HepG2 (cell line): ENCODE measurements at regions of chr16 and their contacts with region 1.

Region 1: DNA sequence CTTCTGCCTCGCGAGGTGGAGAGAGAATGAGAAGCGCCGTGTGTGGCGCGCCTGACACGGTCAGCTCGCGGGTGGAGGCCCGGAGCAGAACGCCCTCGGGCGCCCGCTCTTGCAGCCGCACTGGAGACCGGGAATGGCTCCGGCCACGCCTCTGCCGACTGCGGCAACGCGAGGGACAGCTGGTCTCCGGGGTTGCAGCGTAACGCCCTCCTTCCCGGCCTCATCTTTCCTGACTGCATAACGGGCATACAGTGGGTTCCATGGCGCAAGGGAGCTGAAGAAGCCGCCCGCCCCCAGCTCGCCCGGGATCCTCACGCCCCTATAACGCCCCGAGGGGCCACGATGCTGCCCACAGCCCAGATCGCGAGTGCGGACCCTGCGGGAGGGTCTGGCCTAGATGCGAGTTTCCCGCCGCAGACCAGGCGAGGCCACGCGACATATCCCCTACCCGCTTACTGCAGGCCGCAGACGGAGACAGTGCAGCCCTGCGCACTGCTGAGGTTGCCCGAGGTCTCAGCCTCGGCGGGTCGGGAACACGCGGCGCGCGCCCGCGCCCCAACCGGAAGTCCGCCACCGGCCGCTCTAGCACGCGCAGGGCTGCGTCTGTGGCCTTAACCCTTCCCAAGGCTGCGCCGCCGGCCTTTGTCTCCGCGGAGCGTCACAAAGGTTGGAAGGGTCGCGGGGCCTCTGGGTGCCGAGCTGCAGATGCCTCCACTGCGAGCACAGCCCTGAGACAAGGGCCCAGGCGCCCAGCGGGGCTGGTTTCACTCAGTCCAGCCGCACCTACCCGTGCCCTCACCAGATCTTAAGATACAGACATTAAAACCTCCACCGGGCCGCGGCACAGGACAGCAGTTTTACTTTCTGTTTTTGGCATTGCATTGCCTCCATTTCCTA is 18.8 kb downstream of the BCL7C start:
- DNase-seq: peak; percentile 91
- ATAC-seq: peak; percentile 93
- H3K4me3 ChIP-seq: peak overlapping the region; percentile 84 to 97 (median 86)
- H3K27ac ChIP-seq: peak overlapping the region; percentile 86
- H3K4me1 ChIP-seq: peaks cover 35% of the 10 kb centered on the region
- H3K27me3 ChIP-seq: no peaks in the 10 kb centered on the region; a peak in 1 of 5 replicates
- CTCF ChIP-seq: peak; percentile 45
- EP300 ChIP-seq: peak; percentile 50 to 52; a peak in 2 of 4 replicates
- POLR2A ChIP-seq: peak; percentile 96 to 99
- RAD21 ChIP-seq: peak; percentile 80

Region 2: GRCh38 chr16:30786936-30787612 is 88.0 kb before region 1 on chr16 and contains the start of gene ZNF629:
- CTCF ChIA-PET with region 1: no interaction called
- POLR2A ChIA-PET with region 1: interaction called, 27 read pairs
- in situ Hi-C with region 1: no loop called
- intact Hi-C with region 1: loop called (anchors 1 kb)
- DNase-seq: peak; percentile 79
- ATAC-seq: peak; percentile 83
- H3K4me3 ChIP-seq: peak within 1 kb of the TSS; percentile 99 to 100 (median 100)
- H3K27ac ChIP-seq: peak within 1 kb of the TSS; percentile 78
- H3K4me1 ChIP-seq: peaks cover 30% of the 10 kb centered on the region
- H3K27me3 ChIP-seq: peaks cover 3 to 5% of the 10 kb centered on the region in 2 experiments; a peak in 2 of 5 replicates
- CTCF ChIP-seq: peak; percentile 43
- EP300 ChIP-seq: peak in 1 of 2 experiments; percentile 46; a peak in 2 of 4 replicates
- POLR2A ChIP-seq: peak; percentile 47 to 52
- RAD21 ChIP-seq: peak; percentile 62
- total RNA-seq, gene ZNF629: 14.3 and 16.5 TPM in 2 replicates

Region 3: GRCh38 chr16:30813821-30814189 is 61.3 kb before region 1 on chr16:
- CTCF ChIA-PET with region 1: no interaction called
- POLR2A ChIA-PET with region 1: interaction called, 69 read pairs
- in situ Hi-C with region 1: no loop called
- intact Hi-C with region 1: no loop called
- DNase-seq: no peak
- ATAC-seq: no peak
- H3K4me3 ChIP-seq: peak overlapping the region; percentile 38 to 70 (median 59); a peak in 5 of 6 replicates
- H3K27ac ChIP-seq: peak overlapping the region; percentile 91
- H3K4me1 ChIP-seq: peaks cover 47% of the 10 kb centered on the region
- H3K27me3 ChIP-seq: no peaks in the 10 kb centered on the region
- CTCF ChIP-seq: no peak
- EP300 ChIP-seq: no peak
- POLR2A ChIP-seq: no peak
- RAD21 ChIP-seq: no peak

Region 4: GRCh38 chr16:30844671-30845449 is 30.2 kb before region 1 on chr16:
- CTCF ChIA-PET with region 1: interaction called, 3 read pairs
- POLR2A ChIA-PET with region 1: interaction called, 67 read pairs
- in situ Hi-C with region 1: no loop called
- intact Hi-C with region 1: loop called (anchors 2 kb)
- DNase-seq: peak; percentile 97
- ATAC-seq: peak; percentile 86
- H3K4me3 ChIP-seq: peak overlapping the region; percentile 32 to 66 (median 45)
- H3K27ac ChIP-seq: peak overlapping the region; percentile 64
- H3K4me1 ChIP-seq: peaks cover 33% of the 10 kb centered on the region
- H3K27me3 ChIP-seq: no peaks in the 10 kb centered on the region
- CTCF ChIP-seq: peak; percentile 96
- EP300 ChIP-seq: no peak; a peak in 1 of 4 replicates
- POLR2A ChIP-seq: peak; percentile 23 to 44; a peak in 3 of 4 replicates
- RAD21 ChIP-seq: peak; percentile 89

Region 5: DNA sequence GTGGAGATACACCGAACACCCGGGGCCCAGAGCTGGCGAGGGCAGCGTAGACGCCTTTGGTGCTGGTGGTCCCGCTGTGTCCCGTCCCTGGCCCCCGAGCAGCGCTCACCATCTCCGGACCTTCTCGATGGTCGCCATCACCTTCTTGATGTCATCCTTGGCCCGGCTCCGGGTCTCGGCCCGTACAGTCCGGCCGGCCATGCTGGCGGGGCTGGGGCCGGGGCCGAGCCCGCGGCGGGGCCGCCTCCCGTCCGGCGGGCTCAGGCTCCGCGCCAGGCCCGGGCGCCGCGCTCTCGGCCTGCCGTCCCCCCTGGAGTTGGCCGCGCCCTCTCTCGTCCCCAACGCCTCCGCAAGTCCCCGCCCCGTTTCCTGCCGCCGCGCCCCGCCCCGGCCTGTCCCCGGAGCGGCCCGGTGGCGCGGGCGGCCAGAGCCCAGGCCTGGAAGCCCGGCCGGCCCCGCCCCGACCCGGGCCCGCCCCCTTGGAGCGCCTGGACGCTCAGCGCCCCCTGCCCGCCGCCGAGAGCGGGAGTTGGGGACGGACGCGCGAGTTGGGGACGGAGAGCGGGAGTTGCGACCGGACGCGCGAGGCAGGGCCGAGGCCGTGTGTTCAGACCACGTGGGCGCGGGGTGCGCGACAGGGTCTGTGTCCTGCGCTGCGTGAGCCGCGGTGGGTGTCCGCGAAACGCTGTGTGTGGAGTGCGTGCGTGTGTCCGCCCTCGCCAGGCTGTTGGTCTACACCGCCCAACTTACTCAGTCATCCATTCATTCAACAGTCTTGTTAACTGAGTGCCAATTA is 18.9 kb after region 1 on chr16 and contains the start of gene BCL7C:
- CTCF ChIA-PET with region 1: no interaction called
- POLR2A ChIA-PET with region 1: interaction called, 18 read pairs
- in situ Hi-C with region 1: no loop called
- intact Hi-C with region 1: loop called (anchors 2 kb)
- DNase-seq: peak; percentile 90
- ATAC-seq: peak; percentile 82
- H3K4me3 ChIP-seq: peak within 1 kb of the TSS; percentile 72 to 100 (median 84)
- H3K27ac ChIP-seq: peak within 1 kb of the TSS; percentile 65
- H3K4me1 ChIP-seq: peaks cover 56% of the 10 kb centered on the region
- H3K27me3 ChIP-seq: no peaks in the 10 kb centered on the region
- CTCF ChIP-seq: peak; percentile 93
- EP300 ChIP-seq: no peak
- POLR2A ChIP-seq: peak; percentile 52 to 86; a peak in 3 of 4 replicates
- RAD21 ChIP-seq: peak; percentile 71
- total RNA-seq, gene BCL7C: 20.6 and 33.8 TPM in 2 replicates

Region 6: DNA sequence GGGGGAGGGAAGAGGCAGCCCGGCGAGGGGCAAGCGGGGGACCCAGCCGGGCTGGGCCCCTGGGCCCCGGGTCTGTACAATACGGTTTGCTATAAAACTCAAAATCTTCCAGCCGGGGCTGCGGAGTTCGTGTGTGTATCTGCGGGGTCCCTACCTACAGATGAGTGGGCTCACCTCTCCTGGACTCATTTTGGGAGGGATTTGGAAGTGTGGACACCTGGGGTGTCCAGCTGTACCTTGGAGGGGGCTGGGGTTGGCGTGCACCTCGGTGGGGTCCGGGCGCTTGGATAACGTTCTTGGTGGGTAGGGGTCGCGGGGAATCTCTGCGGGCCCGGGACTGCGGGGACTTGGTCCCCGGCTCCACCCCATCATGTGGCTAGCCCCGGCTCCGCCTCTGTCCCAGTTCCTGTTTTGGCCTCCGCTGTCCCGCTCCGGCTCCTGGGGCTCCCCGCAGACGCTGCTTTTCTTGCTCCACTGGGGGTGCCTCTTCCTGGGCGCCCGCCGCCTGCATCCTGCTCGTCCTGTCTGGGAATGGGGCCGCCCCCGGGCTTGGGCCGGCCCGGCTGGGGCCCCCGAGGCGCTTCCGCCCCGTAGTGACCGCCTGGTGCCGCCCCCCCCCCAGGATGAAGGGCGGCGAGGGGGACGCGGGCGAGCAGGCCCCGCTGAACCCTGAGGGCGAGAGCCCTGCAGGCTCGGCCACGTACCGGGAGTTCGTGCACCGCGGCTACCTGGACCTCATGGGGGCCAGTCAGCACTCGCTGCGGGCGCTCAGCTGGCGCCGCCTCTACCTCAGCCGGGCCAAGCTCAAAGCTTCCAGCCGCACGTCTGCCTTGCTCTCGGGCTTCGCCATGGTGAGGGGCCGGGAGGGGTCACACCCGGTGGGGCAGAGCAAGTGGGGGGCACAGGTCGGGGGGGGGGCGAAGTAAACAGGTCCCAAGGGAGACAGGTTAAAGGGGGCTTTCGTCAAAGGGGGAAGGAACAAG is 73.9 kb after region 1 on chr16 and contains the start of gene ORAI3:
- CTCF ChIA-PET with region 1: no interaction called
- POLR2A ChIA-PET with region 1: no interaction called
- in situ Hi-C with region 1: no loop called
- intact Hi-C with region 1: no loop called
- DNase-seq: no peak
- ATAC-seq: peak; percentile 48
- H3K4me3 ChIP-seq: peak within 1 kb of the TSS; percentile 74 to 93 (median 88)
- H3K27ac ChIP-seq: peak within 1 kb of the TSS; percentile 74
- H3K4me1 ChIP-seq: peaks cover 35% of the 10 kb centered on the region
- H3K27me3 ChIP-seq: no peaks in the 10 kb centered on the region; a peak in 1 of 5 replicates
- CTCF ChIP-seq: no peak; the same call in 1 of the 2 replicates
- EP300 ChIP-seq: no peak
- POLR2A ChIP-seq: 0 out of 4 replicates have a peak, but pooled peaks of 1 of the 2 experiments have one; percentile 20
- RAD21 ChIP-seq: peak; percentile 24; the same call in 1 of the 2 replicates
- total RNA-seq, gene ORAI3: 6.3 and 11.4 TPM in 2 replicates

Region 7: GRCh38 chr16:31458844-31459721 is 584.0 kb after region 1 on chr16 and contains the start of gene ARMC5:
- CTCF ChIA-PET with region 1: no interaction called
- POLR2A ChIA-PET with region 1: no interaction called
- in situ Hi-C with region 1: no loop called
- intact Hi-C with region 1: no loop called
- DNase-seq: peak; percentile 98
- ATAC-seq: peak; percentile 76
- H3K4me3 ChIP-seq: peak within 1 kb of the TSS; percentile 71 to 98 (median 83)
- H3K27ac ChIP-seq: peak within 1 kb of the TSS; percentile 95
- H3K4me1 ChIP-seq: peaks cover 48% of the 10 kb centered on the region
- H3K27me3 ChIP-seq: no peaks in the 10 kb centered on the region; a peak in 1 of 5 replicates
- CTCF ChIP-seq: peak; percentile 90
- EP300 ChIP-seq: no peak; a peak in 1 of 4 replicates
- POLR2A ChIP-seq: peak; percentile 87 to 97
- RAD21 ChIP-seq: peak; percentile 63
- total RNA-seq, gene ARMC5: 13.0 and 22.3 TPM in 2 replicates